A673 (cell line): ENCODE measurements at regions of chr15 and their contacts with region 1.

Region 1: GRCh38 chr15:75727851-75728715 is 15.4 kb upstream of the CSPG4 start:
- DNase-seq: peak; percentile 67
- H3K4me3 ChIP-seq: no peak overlapping the region
- H3K27ac ChIP-seq: no peak overlapping the region
- H3K4me1 ChIP-seq: no peaks in the 10 kb centered on the region
- H3K27me3 ChIP-seq: no peaks in the 10 kb centered on the region
- CTCF ChIP-seq: peak; percentile 77

Region 2: DNA sequence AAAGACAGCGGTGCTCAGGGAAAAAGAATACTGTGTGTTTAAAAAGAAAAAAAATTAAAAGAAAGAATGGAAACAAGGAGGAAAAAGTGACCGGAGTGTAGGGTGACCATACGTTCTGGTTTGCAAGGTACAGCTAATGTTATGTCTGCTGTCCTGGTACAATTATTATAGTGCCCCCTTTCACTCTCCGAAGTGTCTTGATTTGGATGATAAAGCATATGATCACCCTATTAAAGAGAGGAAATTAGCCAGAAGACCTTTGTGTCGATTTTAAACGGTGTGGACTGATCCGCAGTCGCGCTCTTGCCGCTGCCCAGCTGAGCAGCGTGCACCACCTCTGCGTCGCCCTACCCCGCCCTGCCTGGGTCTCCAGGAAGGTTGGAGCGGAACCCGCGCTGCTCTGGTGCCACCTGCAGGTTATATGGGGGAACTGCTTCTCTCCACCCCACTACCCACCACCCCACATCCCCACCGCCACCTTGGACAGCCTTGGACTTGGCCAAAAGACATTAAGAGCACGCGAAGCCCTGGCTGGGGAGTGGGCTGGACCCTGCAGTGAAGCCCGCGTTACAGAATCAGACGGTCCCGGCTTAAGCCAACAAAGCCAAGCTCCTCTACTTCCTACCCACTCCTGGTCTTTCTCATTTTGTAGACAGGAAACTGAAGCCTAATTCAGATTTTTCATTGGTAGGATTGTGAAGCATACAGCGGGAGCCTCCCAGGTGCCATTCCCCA is 73.9 kb after region 1 on chr15:
- CTCF ChIA-PET with region 1: no interaction called
- POLR2A ChIA-PET with region 1: no interaction called
- intact Hi-C with region 1: loop called (anchors 5 kb)
- DNase-seq: peak; percentile 83
- H3K4me3 ChIP-seq: peak overlapping the region; percentile 16
- H3K27ac ChIP-seq: no peak overlapping the region
- H3K4me1 ChIP-seq: no peaks in the 10 kb centered on the region
- H3K27me3 ChIP-seq: peaks cover 22% of the 10 kb centered on the region
- CTCF ChIP-seq: peak; percentile 86